ENCODE measurements at regions of chr17 and their contacts with region 1.

Region 1: GRCh38 chr17:79741751-79742588 is 11.2 kb downstream of the ENPP7 start:
- DNase-seq: peak; percentile 67
- H3K4me3 Mint-ChIP-seq: no peak overlapping the region
- H3K27ac Mint-ChIP-seq: no peak overlapping the region
- H3K4me1 Mint-ChIP-seq: peaks cover 2% of the 10 kb centered on the region
- H3K27me3 Mint-ChIP-seq: peaks cover 28% of the 10 kb centered on the region

Region 2: DNA sequence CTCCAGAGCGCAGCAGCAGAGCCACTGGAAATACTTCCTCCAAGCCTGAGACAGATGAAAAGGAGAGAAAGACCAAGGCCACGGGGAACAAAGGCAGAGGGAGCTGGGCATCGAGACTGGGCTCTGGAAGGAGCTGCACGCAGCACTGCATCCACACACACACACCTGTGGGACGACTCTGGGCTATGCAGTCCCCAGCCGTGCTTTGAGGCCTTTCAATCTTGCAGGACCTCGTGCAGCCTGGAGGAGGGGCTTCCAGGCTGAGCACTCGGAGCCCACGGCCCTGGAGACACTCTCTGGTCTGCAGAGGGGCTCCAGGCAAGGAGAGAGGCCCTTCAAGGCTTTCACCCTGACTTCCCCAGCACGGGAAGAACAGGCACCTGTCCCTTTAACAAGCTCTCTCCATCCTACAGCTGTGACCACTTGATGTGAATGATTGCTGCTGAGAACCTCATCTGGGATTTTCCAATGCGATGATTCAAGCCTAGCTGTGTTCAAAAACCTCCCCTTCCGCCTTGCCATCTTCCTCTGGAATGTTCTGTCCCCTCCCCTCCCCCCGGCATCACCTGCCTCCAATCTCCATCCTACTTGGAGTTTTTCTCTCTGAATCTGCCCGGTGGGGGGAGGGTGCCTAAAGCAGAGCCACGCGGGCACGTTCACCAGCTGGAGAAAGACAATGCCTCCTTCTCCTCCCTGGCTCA is 168.6 kb before region 1 on chr17:
- intact Hi-C with region 1: no loop called
- DNase-seq: no peak
- H3K4me3 Mint-ChIP-seq: no peak overlapping the region
- H3K27ac Mint-ChIP-seq: no peak overlapping the region
- H3K4me1 Mint-ChIP-seq: no peaks in the 10 kb centered on the region
- H3K27me3 Mint-ChIP-seq: no peaks in the 10 kb centered on the region

Region 3: GRCh38 chr17:79991140-79991923 is 249.4 kb after region 1 on chr17:
- intact Hi-C with region 1: loop called (anchors 10 kb)
- DNase-seq: peak; percentile 75
- H3K4me3 Mint-ChIP-seq: peak overlapping the region; percentile 35
- H3K27ac Mint-ChIP-seq: no peak overlapping the region
- H3K4me1 Mint-ChIP-seq: peaks cover 24% of the 10 kb centered on the region
- H3K27me3 Mint-ChIP-seq: peaks cover 5% of the 10 kb centered on the region

Measured in activated T-helper 2 cell treated with anti-CD3 and anti-CD28 coated beads, Interferon-gamma antibody, Interleukin-2, Interleukin-4, amounts not matched to agents 10 μg/mL and 5 μg/mL and 100 μg/mL, durations not matched to agents 14 hours and 24 hours and 36 hours (primary cell).